A549 (cell line): ENCODE measurements at regions of chr6 and their contacts with region 1.

Region 1: GRCh38 chr6:136226027-136226673 is 24.0 kb downstream of the MTFR2 start:
- DNase-seq: peak; percentile 45 to 67
- ATAC-seq: peak; percentile 83 to 86
- H3K4me3 ChIP-seq: peak overlapping the region; percentile 30; the same call in 1 of the 3 replicates
- H3K27ac ChIP-seq: peak overlapping the region; percentile 87 to 93
- H3K4me1 ChIP-seq: peaks cover 22% of the 10 kb centered on the region
- CTCF ChIP-seq: peak; percentile 98
- EP300 ChIP-seq: peak; percentile 47 to 73; a peak in 3 of 5 replicates
- POLR2A ChIP-seq: no peak
- RAD21 ChIP-seq: peak; percentile 99

Region 2: DNA sequence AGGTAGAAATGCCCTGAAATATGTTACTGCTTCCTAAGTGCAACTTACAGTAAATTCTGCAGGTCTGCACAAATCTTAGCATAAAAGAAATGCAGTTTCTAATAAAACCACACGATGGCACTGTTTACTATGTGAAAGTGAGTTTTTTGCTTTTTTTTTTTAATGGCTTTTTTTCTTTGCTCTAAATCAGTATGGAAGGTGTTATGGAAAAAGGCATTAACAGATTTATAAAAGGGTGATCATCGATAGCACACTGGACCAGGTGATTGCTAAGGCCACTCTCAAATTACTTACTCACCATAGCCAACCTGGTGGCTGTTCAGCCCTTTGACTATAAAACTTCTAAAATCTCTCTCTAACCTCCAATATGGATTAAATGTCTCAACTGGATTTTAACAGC is 774.5 kb before region 1 on chr6:
- CTCF ChIA-PET with region 1: interaction called, 22 read pairs
- POLR2A ChIA-PET with region 1: no interaction called
- DNase-seq: peak in 1 of 2 experiments; percentile 32
- ATAC-seq: no peak; a peak in 1 of 6 replicates
- H3K4me3 ChIP-seq: no peak overlapping the region
- H3K27ac ChIP-seq: no peak overlapping the region
- H3K4me1 ChIP-seq: peaks cover 12% of the 10 kb centered on the region; the same call in 2 of the 3 replicates
- CTCF ChIP-seq: peak; percentile 71
- EP300 ChIP-seq: no peak
- POLR2A ChIP-seq: no peak
- RAD21 ChIP-seq: peak; percentile 64 to 72

Region 3: GRCh38 chr6:135506270-135506997 is 719.7 kb before region 1 on chr6:
- CTCF ChIA-PET with region 1: interaction called, 23 read pairs
- POLR2A ChIA-PET with region 1: no interaction called
- DNase-seq: peak; percentile 21 to 69
- ATAC-seq: peak; percentile 62 to 83; a peak in 4 of 6 replicates
- H3K4me3 ChIP-seq: no peak overlapping the region
- H3K27ac ChIP-seq: peak overlapping the region; percentile 44 to 74; a peak in 5 of 6 replicates
- H3K4me1 ChIP-seq: peaks cover 23% of the 10 kb centered on the region
- CTCF ChIP-seq: peak; percentile 67
- EP300 ChIP-seq: no peak
- POLR2A ChIP-seq: no peak
- RAD21 ChIP-seq: peak; percentile 80 to 83

Region 4: DNA sequence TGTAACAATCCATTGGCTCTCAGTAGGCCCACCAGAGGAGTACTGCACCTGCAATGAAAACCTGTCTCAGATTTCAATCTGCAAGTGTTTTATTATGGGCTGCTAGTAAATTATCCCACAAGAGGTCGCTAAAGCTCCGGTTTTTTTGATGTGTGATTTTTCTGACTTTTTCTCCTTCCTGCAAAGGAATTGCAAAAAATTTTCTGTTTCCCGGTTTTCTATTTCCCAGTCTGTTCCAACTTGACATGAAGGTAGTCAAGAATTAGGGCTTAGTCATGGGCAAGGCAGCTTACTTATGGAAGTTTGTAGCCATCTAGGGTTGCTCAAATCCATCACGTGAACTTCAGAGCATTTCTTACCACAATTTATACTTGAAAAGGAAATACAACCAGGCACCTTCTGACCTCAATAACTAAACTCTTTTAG is 690.1 kb before region 1 on chr6:
- CTCF ChIA-PET with region 1: interaction called, 50 read pairs
- POLR2A ChIA-PET with region 1: no interaction called
- DNase-seq: peak; percentile 24 to 63
- ATAC-seq: peak; percentile 43 to 74; a peak in 5 of 6 replicates
- H3K4me3 ChIP-seq: no peak overlapping the region
- H3K27ac ChIP-seq: peak overlapping the region; percentile 76 to 85
- H3K4me1 ChIP-seq: peaks cover 36% of the 10 kb centered on the region
- CTCF ChIP-seq: peak; percentile 76
- EP300 ChIP-seq: peak in 1 of 2 experiments; percentile 22; a peak in 1 of 5 replicates
- POLR2A ChIP-seq: no peak
- RAD21 ChIP-seq: peak; percentile 78 to 87

Region 5: DNA sequence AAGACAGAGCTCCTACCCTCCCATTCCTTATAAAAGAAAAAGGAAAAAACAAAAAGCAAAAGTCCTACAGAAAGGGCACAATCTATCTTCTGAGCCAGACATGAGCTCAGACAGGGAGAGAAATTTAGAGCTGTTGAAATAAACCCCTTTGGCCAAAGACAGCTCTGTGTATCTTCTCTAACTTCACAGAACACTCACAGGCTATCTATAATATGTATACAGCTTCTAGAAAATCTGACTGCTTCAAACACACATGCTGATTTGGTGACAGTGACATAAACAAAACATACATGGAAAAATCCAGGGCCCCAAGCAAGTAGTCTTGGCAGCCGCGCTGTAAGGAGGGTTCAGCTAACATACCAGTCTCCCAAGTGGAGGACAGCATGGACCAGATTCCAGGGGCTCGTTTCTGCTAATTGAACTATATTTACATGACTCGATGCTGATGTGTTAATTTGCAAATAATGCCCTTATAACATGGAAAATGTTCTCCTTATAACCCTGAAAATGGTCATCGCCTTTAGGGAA is 13.1 kb before region 1 on chr6:
- CTCF ChIA-PET with region 1: interaction called, 21 read pairs
- POLR2A ChIA-PET with region 1: no interaction called
- DNase-seq: no peak
- ATAC-seq: no peak
- H3K4me3 ChIP-seq: no peak overlapping the region
- H3K27ac ChIP-seq: no peak overlapping the region
- H3K4me1 ChIP-seq: no peaks in the 10 kb centered on the region
- CTCF ChIP-seq: no peak
- EP300 ChIP-seq: no peak
- POLR2A ChIP-seq: no peak
- RAD21 ChIP-seq: no peak

Region 6: GRCh38 chr6:136772685-136773472 is 546.7 kb after region 1 on chr6:
- CTCF ChIA-PET with region 1: no interaction called
- POLR2A ChIA-PET with region 1: no interaction called
- DNase-seq: no peak
- ATAC-seq: no peak
- H3K4me3 ChIP-seq: no peak overlapping the region
- H3K27ac ChIP-seq: no peak overlapping the region
- H3K4me1 ChIP-seq: peaks cover 18% of the 10 kb centered on the region
- CTCF ChIP-seq: no peak
- EP300 ChIP-seq: no peak
- POLR2A ChIP-seq: no peak
- RAD21 ChIP-seq: no peak